ENCODE measurements at regions of chr7 and their contacts with region 1.

Region 1: DNA sequence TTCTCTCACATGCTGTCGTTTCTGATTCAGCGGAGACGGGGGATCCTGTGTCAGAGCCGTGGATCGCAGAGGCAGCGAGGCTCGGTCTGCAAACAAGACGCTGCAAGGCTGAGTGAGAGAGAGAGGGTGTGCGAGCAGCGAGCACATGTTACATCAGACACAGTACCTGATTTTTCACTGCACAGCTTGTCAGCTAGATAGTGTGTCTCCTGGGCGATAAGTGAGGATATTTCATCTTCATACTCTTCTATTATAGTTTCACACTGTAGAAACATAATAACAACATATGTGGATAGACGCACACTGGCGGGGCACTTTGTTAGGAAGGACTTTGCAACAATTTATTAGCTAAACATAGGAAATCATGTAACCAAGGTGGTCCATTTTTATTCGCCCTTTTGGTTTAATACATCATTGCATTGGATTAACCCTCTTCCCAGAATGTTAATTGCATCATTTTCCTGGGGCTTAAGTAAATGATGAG is 39.5 kb downstream of the CNPY1 start:
- DNase-seq: peak; percentile 53
- ATAC-seq: peak; percentile 58
- H3K4me3 Mint-ChIP-seq: no peak overlapping the region
- H3K27ac Mint-ChIP-seq: no peak overlapping the region
- H3K4me1 Mint-ChIP-seq: peaks cover 24% of the 10 kb centered on the region
- H3K27me3 Mint-ChIP-seq: peaks cover 77% of the 10 kb centered on the region

Region 2: DNA sequence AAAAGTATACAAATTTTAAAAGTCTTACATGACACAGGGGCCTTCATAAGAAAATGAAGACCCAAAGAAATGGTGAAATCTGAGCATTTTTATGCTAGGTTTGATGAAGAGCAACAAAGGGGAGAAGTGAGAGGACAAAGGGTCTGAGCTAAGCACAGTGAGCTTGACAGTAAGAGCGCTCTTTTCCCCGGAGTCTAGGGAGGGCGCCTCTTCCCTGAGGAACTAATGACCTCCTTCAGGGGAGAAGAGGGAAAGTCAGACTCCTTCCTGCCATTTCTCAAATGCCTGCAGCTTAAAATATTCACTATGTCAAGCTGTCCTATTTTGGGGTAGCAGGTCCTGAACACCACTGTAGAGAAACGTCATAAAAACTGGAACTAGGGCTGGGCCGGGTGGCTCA is 485.9 kb before region 1 on chr7:
- CTCF ChIA-PET with region 1: no interaction called
- POLR2A ChIA-PET with region 1: no interaction called
- intact Hi-C with region 1: no loop called
- DNase-seq: no peak
- ATAC-seq: no peak
- H3K4me3 Mint-ChIP-seq: no peak overlapping the region
- H3K27ac Mint-ChIP-seq: no peak overlapping the region
- H3K4me1 Mint-ChIP-seq: no peaks in the 10 kb centered on the region
- H3K27me3 Mint-ChIP-seq: peaks cover 3% of the 10 kb centered on the region

Region 3: DNA sequence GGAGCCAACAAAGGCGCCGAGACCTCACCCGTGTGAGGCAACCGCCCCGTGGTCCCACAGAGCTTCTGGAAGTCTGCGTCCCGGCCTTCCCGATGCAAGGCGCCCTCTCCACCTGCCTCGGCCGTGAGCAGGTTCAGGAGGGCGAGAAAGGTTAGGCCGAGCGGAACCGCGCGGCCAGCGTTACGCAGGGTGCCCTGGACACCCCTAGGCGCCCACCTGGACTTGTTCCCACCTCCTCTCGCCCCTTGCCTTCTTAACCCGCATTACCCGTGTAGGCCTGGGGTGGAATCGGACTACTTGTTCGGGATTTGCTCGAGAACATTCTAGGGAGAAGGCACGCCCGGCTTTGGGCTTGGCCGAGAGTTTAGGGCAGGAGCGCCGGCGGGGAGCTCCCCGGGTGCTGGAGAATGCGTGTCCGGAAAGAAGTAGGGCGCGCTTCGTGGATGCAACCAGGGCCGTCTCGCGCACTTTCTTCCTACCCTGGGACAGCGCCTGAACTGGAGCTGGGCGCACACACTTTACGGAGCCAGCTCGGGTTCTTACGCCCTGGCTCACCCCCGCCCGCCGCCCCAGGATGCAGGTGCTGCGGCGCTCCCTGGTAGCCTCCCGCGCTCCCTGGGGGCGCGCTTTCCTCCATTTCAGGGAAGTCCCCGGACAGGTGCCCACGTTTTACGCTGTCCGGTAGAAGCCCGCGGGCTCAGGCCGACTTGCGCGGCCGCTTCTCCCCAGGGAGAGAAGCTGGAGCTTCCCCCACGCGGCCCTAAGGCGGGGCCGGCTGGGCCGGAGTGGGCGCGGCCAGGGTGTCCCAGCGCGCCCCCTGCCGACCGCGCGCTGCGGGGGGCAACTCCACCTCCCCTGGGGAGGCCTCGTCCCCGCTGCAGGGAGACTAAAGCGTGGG is 134.8 kb before region 1 on chr7:
- CTCF ChIA-PET with region 1: no interaction called
- POLR2A ChIA-PET with region 1: no interaction called
- intact Hi-C with region 1: loop called in 1 of 2 experiments (anchors 1 kb)
- DNase-seq: peak; percentile 45
- ATAC-seq: peak; percentile 74
- H3K4me3 Mint-ChIP-seq: no peak overlapping the region
- H3K27ac Mint-ChIP-seq: no peak overlapping the region
- H3K4me1 Mint-ChIP-seq: peaks cover 29% of the 10 kb centered on the region
- H3K27me3 Mint-ChIP-seq: peaks cover 65% of the 10 kb centered on the region

Region 4: DNA sequence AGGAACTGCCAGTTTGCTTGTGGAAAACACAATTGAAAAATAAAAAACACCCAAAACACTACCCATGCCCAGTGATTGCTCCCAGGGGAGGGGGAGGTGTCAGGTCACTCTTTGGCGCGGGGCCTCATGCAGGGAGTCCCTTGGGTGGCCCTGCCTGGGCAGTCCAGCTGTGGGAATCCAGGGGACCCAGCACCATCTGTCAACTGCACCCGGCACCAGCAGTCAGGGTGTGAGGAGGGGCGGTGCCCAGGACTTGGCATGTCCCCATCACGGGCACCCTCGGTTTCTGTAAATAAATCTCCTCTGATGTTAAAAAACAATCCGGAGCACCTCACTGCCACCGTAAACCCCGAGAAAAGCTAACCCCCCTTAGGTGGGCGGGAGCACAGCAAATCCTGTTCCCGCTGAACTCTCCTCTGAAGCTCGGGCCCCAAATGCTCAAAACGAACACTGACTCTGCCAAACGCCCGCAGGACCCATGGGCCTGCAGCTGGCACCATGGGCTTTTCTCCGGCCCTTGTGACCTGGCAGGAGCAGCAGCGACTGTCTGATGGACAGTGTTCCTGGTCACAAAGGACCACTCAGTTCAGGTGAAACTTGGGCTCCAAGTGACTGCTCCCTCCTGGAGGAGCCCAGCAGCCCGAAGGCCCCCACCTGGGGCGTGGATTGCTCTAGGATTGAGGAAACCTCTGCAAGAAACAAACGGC is 67.4 kb before region 1 on chr7:
- CTCF ChIA-PET with region 1: no interaction called
- POLR2A ChIA-PET with region 1: no interaction called
- intact Hi-C with region 1: no loop called
- DNase-seq: no peak
- ATAC-seq: no peak
- H3K4me3 Mint-ChIP-seq: no peak overlapping the region
- H3K27ac Mint-ChIP-seq: no peak overlapping the region
- H3K4me1 Mint-ChIP-seq: no peaks in the 10 kb centered on the region
- H3K27me3 Mint-ChIP-seq: peaks cover 38% of the 10 kb centered on the region

Region 5: GRCh38 chr7:155456738-155457564 is 49.9 kb before region 1 on chr7:
- CTCF ChIA-PET with region 1: interaction called, 4 read pairs
- POLR2A ChIA-PET with region 1: no interaction called
- intact Hi-C with region 1: loop called (anchors 1 to 2 kb)
- DNase-seq: peak; percentile 69
- ATAC-seq: peak; percentile 33
- H3K4me3 Mint-ChIP-seq: peak overlapping the region; percentile 54
- H3K27ac Mint-ChIP-seq: no peak overlapping the region
- H3K4me1 Mint-ChIP-seq: peaks cover 18% of the 10 kb centered on the region
- H3K27me3 Mint-ChIP-seq: peaks cover 67% of the 10 kb centered on the region

Region 6: GRCh38 chr7:155533827-155534690 is 27.2 kb after region 1 on chr7:
- CTCF ChIA-PET with region 1: interaction called, 3 read pairs
- POLR2A ChIA-PET with region 1: no interaction called
- intact Hi-C with region 1: loop called (anchors 2 kb)
- DNase-seq: peak; percentile 69
- ATAC-seq: peak; percentile 69
- H3K4me3 Mint-ChIP-seq: peak overlapping the region; percentile 37
- H3K27ac Mint-ChIP-seq: no peak overlapping the region
- H3K4me1 Mint-ChIP-seq: peaks cover 15% of the 10 kb centered on the region
- H3K27me3 Mint-ChIP-seq: peaks cover 64% of the 10 kb centered on the region

Region 7: GRCh38 chr7:157004050-157004838 is 1497.3 kb after region 1 on chr7:
- CTCF ChIA-PET with region 1: no interaction called
- POLR2A ChIA-PET with region 1: no interaction called
- intact Hi-C with region 1: loop called (anchors 5 kb)
- DNase-seq: peak; percentile 38
- ATAC-seq: no peak
- H3K4me3 Mint-ChIP-seq: no peak overlapping the region
- H3K27ac Mint-ChIP-seq: no peak overlapping the region
- H3K4me1 Mint-ChIP-seq: peaks cover 19% of the 10 kb centered on the region
- H3K27me3 Mint-ChIP-seq: peaks cover 67% of the 10 kb centered on the region